Activated CD8-positive, alpha-beta T cell treated with anti-CD3 and anti-CD28 coated beads, Interleukin-2, amount 10 ng/mL, durations not matched to agents 7 days and 5 days (primary cell): ENCODE measurements at regions of chr5 and their contacts with region 1.

Region 1: DNA sequence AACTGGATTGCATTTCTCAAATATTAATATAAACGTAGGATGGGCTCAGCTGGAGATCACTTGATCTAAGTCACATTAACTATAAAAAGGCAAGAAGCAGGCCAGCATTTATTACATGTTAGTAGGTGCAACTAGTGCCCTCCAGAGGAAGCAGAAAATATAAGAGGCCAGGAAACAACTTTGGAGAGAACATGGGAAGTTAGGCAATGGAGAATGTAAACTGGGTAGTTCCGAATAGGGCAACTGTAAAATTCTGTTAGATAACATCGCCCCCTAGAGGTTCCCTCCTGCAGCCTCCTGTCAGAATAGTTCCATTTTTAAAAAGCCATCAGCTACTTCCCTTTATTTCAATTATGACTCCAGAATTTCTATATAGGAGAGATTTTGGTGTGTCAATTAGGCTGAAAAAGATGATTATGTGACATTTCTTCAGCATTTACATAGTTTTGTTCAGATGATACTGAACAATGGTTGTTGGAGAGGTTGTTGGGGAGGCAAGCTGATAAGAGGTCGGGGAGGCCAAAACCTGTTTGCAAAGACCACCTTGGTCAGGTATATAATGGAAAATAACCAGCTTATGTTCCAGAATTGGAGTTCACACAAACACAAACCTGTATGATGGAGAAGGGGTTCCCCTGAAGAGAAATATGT is 22.4 kb downstream of the CCL28 start:
- DNase-seq: peak; percentile 65
- ATAC-seq: peak; percentile 84
- H3K4me3 Mint-ChIP-seq: no peak overlapping the region
- H3K27ac Mint-ChIP-seq: peak overlapping the region; percentile 28
- H3K4me1 Mint-ChIP-seq: peaks cover 11% of the 10 kb centered on the region
- H3K27me3 Mint-ChIP-seq: no peaks in the 10 kb centered on the region

Region 2: DNA sequence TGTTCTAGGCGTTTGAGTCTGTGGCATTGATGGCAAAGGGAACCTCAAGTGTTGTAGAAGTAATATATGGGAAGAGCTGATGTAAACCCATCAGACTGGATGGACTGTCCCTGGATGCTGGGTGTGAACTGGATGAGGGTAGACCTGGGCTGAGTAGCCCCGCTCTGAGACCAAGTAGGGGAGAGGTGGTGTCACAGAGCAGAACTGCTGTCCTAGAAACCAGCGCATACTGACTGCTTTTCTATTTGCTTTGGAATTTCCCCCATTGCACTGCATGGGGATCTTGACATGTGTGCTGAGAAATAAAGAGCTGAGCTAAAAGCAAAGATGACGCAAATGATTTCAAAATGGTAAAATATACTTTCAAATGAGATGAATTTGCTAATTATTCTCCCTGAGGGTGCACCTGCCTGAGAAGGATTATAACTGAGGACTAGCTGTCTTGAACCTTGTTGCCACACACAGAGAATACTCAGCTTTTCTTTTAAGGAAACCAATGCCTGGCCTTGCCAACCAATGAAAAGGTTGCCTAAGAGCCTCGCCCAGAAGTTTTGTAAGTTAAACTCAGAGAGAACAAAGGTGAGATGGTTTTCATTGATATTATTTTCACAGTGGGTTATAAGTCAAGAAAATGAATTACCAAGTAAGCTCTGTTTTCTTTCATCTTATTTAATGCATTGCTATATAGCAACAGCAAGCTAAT is 153.0 kb before region 1 on chr5:
- CTCF ChIA-PET with region 1: interaction called, 10 read pairs
- POLR2A ChIA-PET with region 1: no interaction called
- DNase-seq: no peak
- ATAC-seq: no peak
- H3K4me3 Mint-ChIP-seq: no peak overlapping the region
- H3K27ac Mint-ChIP-seq: no peak overlapping the region
- H3K4me1 Mint-ChIP-seq: peaks cover 7% of the 10 kb centered on the region
- H3K27me3 Mint-ChIP-seq: peaks cover 2% of the 10 kb centered on the region

Region 3: GRCh38 chr5:43305948-43306565 is 83.7 kb before region 1 on chr5:
- CTCF ChIA-PET with region 1: interaction called, 20 read pairs
- POLR2A ChIA-PET with region 1: no interaction called
- DNase-seq: no peak
- ATAC-seq: peak; percentile 34
- H3K4me3 Mint-ChIP-seq: no peak overlapping the region
- H3K27ac Mint-ChIP-seq: peak overlapping the region; percentile 39
- H3K4me1 Mint-ChIP-seq: peaks cover 80% of the 10 kb centered on the region
- H3K27me3 Mint-ChIP-seq: no peaks in the 10 kb centered on the region

Region 4: GRCh38 chr5:43313035-43313853 is 76.6 kb before region 1 on chr5 and contains the start of gene HMGCS1:
- CTCF ChIA-PET with region 1: interaction called, 18 read pairs
- POLR2A ChIA-PET with region 1: interaction called, 3 read pairs
- DNase-seq: peak; percentile 99
- ATAC-seq: peak; percentile 94
- H3K4me3 Mint-ChIP-seq: peak within 1 kb of the TSS; percentile 96
- H3K27ac Mint-ChIP-seq: peak within 1 kb of the TSS; percentile 95
- H3K4me1 Mint-ChIP-seq: peaks cover 62% of the 10 kb centered on the region
- H3K27me3 Mint-ChIP-seq: no peaks in the 10 kb centered on the region
- total RNA-seq, gene HMGCS1: 82.4 to 90.6 TPM

Region 5: GRCh38 chr5:43332396-43332795 is 57.4 kb before region 1 on chr5:
- CTCF ChIA-PET with region 1: no interaction called
- POLR2A ChIA-PET with region 1: no interaction called
- DNase-seq: no peak
- ATAC-seq: no peak
- H3K4me3 Mint-ChIP-seq: no peak overlapping the region
- H3K27ac Mint-ChIP-seq: no peak overlapping the region
- H3K4me1 Mint-ChIP-seq: no peaks in the 10 kb centered on the region
- H3K27me3 Mint-ChIP-seq: peaks cover 8% of the 10 kb centered on the region

Region 6: GRCh38 chr5:43416803-43417394 is 27.1 kb after region 1 on chr5:
- CTCF ChIA-PET with region 1: no interaction called
- POLR2A ChIA-PET with region 1: no interaction called
- DNase-seq: no peak
- ATAC-seq: no peak
- H3K4me3 Mint-ChIP-seq: no peak overlapping the region
- H3K27ac Mint-ChIP-seq: no peak overlapping the region
- H3K4me1 Mint-ChIP-seq: no peaks in the 10 kb centered on the region
- H3K27me3 Mint-ChIP-seq: peaks cover 3% of the 10 kb centered on the region